ENCODE measurements at regions of chr17 and their contacts with region 1.

Region 1: GRCh38 chr17:7454980-7455379 is 10.1 kb downstream of the CHRNB1 start:
- DNase-seq: no peak
- H3K4me3 ChIP-seq: peak overlapping the region in 1 of 3 experiments; percentile 96
- H3K4me3 Mint-ChIP-seq: peak overlapping the region; percentile 99 to 100
- H3K27ac ChIP-seq: no peak overlapping the region
- H3K27ac Mint-ChIP-seq: peak overlapping the region in 2 of 7 donors; percentile 92 to 94
- H3K4me1 ChIP-seq: peaks cover 9 to 10% of the 10 kb centered on the region in 2 donors
- H3K4me1 Mint-ChIP-seq: peaks cover 17% of the 10 kb centered on the region
- H3K27me3 ChIP-seq: no peaks in the 10 kb centered on the region
- H3K27me3 Mint-ChIP-seq: peaks cover 2 to 8% (median 4%) of the 10 kb centered on the region in 3 donors
- CTCF ChIP-seq: no peak

Region 2: DNA sequence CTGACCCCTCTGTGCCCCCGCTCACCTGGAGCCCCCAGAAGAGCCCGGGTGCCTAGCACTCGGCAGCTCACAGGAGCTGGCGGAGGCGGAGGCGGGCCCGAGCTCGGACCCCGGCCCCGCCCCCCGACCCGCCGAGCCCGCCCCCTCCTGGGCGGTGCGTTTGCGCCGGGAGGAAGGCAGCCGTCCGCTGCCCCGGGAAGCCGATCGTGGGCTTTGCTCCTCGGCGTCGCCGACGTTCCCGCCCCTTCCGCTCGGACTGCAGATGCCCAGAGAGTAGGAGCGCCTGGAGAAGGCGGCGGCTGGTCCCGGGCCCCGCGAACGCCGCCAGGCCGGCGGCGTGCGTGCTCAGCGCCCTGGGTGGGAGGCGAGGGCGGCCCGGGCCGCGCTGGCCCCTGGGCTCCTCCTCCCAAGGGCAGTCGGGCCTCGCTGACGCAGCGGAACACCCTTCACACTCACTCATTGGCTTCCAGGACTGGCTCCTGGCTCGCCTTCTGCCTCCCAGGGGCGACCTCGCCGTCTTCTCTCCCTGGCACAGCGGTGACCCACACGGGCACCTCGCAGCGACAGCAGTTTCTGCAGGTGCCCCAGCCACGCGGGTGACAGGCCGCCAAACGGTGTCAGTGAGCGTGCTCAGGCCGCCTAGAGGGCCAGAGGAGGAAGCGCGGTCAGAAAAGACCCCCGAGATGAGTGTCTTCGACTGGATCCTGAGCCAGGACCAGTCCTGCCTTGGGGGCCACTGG is 60.4 kb before region 1 on chr17 and contains the start of gene PLSCR3:
- intact Hi-C with region 1: no loop called
- DNase-seq: peak; percentile 69 to 73 (median 70)
- H3K4me3 ChIP-seq: peak within 1 kb of the TSS; percentile 61 to 94 (median 79)
- H3K4me3 Mint-ChIP-seq: peak within 1 kb of the TSS; percentile 86 to 95
- H3K27ac ChIP-seq: peak within 1 kb of the TSS; percentile 59 to 81
- H3K27ac Mint-ChIP-seq: peak within 1 kb of the TSS; percentile 83 to 95 (median 90)
- H3K4me1 ChIP-seq: peaks cover 15 to 19% of the 10 kb centered on the region in 2 donors
- H3K4me1 Mint-ChIP-seq: peaks cover 15% of the 10 kb centered on the region
- H3K27me3 ChIP-seq: no peaks in the 10 kb centered on the region
- H3K27me3 Mint-ChIP-seq: peaks cover 0 to 5% (median 3%) of the 10 kb centered on the region in 3 donors
- CTCF ChIP-seq: peak; percentile 21
- polyA plus RNA-seq, gene PLSCR3: 37.6 to 70.4 (median 45.7) TPM

Region 3: GRCh38 chr17:7435221-7435675 is 19.7 kb before region 1 on chr17 and contains the start of gene TMEM102:
- intact Hi-C with region 1: no loop called
- DNase-seq: peak; percentile 97 to 98 (median 98)
- H3K4me3 ChIP-seq: peak within 1 kb of the TSS; percentile 77 to 95 (median 86)
- H3K4me3 Mint-ChIP-seq: peak within 1 kb of the TSS; percentile 86 to 94
- H3K27ac ChIP-seq: peak within 1 kb of the TSS; percentile 79 to 89
- H3K27ac Mint-ChIP-seq: peak within 1 kb of the TSS; percentile 90 to 97 (median 94)
- H3K4me1 ChIP-seq: peaks cover 46 to 50% of the 10 kb centered on the region in 2 donors
- H3K4me1 Mint-ChIP-seq: peaks cover 43% of the 10 kb centered on the region
- H3K27me3 ChIP-seq: peaks cover 14 to 18% of the 10 kb centered on the region in 2 donors
- H3K27me3 Mint-ChIP-seq: peaks cover 22 to 31% (median 24%) of the 10 kb centered on the region in 3 donors
- CTCF ChIP-seq: no peak
- polyA plus RNA-seq, gene TMEM102: 5.1 to 11.3 (median 9.8) TPM

Region 4: DNA sequence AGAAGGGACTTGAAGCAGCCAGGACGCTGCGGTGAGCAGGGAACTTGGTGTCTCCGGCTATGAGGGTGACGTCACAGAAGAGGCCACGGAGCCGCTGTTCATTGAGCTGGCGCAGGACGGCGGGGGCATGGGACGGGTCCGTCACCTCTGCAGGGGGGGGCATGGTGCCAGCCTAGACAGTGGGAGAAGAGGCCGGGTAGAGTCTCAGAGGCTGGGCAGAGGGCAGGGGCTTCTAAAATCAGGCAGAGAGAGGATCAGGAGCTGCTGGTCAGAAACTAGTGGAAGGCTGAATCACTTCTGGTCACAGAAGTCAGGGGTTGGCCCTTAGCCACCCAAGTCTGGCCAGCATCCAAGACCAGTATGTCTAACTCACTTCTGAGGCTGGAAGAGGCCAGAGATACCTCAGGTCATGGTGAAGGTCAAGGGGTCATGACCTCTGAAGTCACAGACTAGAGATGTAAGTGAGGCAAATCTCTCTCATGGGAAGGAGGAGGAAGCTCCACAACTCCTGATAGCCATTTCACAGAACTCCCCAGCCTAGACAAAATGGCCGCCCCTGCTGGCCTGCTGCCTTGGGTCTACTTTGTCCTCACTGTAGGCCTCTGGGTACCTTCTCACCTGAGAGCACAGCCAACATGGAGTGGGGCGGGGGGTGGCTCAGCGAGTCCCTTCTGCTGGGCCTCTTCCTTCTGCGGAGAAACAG is 11.8 kb after region 1 on chr17:
- intact Hi-C with region 1: loop called in 1 of 2 experiments (anchors 1 kb)
- DNase-seq: peak; percentile 81 to 89 (median 87)
- H3K4me3 ChIP-seq: peak overlapping the region in 1 of 3 experiments; percentile 46
- H3K4me3 Mint-ChIP-seq: peak overlapping the region; percentile 41 to 82
- H3K27ac ChIP-seq: peak overlapping the region; percentile 80 to 85
- H3K27ac Mint-ChIP-seq: peak overlapping the region; percentile 88 to 97 (median 94)
- H3K4me1 ChIP-seq: peaks cover 21 to 26% of the 10 kb centered on the region in 2 donors
- H3K4me1 Mint-ChIP-seq: peaks cover 22% of the 10 kb centered on the region
- H3K27me3 ChIP-seq: no peaks in the 10 kb centered on the region
- H3K27me3 Mint-ChIP-seq: no peaks in the 10 kb centered on the region
- CTCF ChIP-seq: no peak

Measured in CD14-positive monocyte (primary cell).